CD14-positive monocyte (primary cell): ENCODE measurements at regions of chr22 and their contacts with region 1.

Region 1: GRCh38 chr22:31272522-31273446 is 19.5 kb downstream of the PIK3IP1 start:
- DNase-seq: peak; percentile 49 to 74 (median 49)
- H3K4me3 ChIP-seq: no peak overlapping the region
- H3K4me3 Mint-ChIP-seq: no peak overlapping the region
- H3K27ac ChIP-seq: peak overlapping the region in 1 of 2 donors; percentile 36
- H3K27ac Mint-ChIP-seq: peak overlapping the region in 5 of 7 donors; percentile 33 to 70 (median 62)
- H3K4me1 ChIP-seq: peaks cover 5 to 6% of the 10 kb centered on the region in 2 donors
- H3K4me1 Mint-ChIP-seq: peaks cover 7% of the 10 kb centered on the region
- H3K27me3 ChIP-seq: no peaks in the 10 kb centered on the region
- H3K27me3 Mint-ChIP-seq: peaks cover 0 to 2% (median 2%) of the 10 kb centered on the region in 3 donors
- CTCF ChIP-seq: peak; percentile 79

Region 2: GRCh38 chr22:30763815-30764686 is 508.7 kb before region 1 on chr22:
- intact Hi-C with region 1: loop called in 1 of 2 experiments (anchors 10 kb)
- DNase-seq: peak; percentile 5 to 27 (median 10)
- H3K4me3 ChIP-seq: no peak overlapping the region
- H3K4me3 Mint-ChIP-seq: no peak overlapping the region
- H3K27ac ChIP-seq: no peak overlapping the region
- H3K27ac Mint-ChIP-seq: no peak overlapping the region
- H3K4me1 ChIP-seq: no peaks in the 10 kb centered on the region
- H3K4me1 Mint-ChIP-seq: no peaks in the 10 kb centered on the region
- H3K27me3 ChIP-seq: no peaks in the 10 kb centered on the region
- H3K27me3 Mint-ChIP-seq: peaks cover 0 to 3% (median 2%) of the 10 kb centered on the region in 3 donors
- CTCF ChIP-seq: peak; percentile 76

Region 3: GRCh38 chr22:31080848-31081649 is 191.7 kb before region 1 on chr22 and contains the start of gene SMTN:
- intact Hi-C with region 1: loop called in 1 of 2 experiments (anchors 5 kb)
- DNase-seq: peak; percentile 76 to 86 (median 80)
- H3K4me3 ChIP-seq: peak within 1 kb of the TSS; percentile 56 to 85 (median 75)
- H3K4me3 Mint-ChIP-seq: peak within 1 kb of the TSS; percentile 83 to 94
- H3K27ac ChIP-seq: peak within 1 kb of the TSS in 1 of 2 donors; percentile 64
- H3K27ac Mint-ChIP-seq: peak within 1 kb of the TSS in 6 of 7 donors; percentile 40 to 87 (median 74)
- H3K4me1 ChIP-seq: peaks cover 40 to 53% of the 10 kb centered on the region in 2 donors
- H3K4me1 Mint-ChIP-seq: peaks cover 45% of the 10 kb centered on the region
- H3K27me3 ChIP-seq: no peaks in the 10 kb centered on the region
- H3K27me3 Mint-ChIP-seq: peaks cover 3 to 6% (median 4%) of the 10 kb centered on the region in 3 donors
- CTCF ChIP-seq: no peak
- polyA plus RNA-seq, gene SMTN: 0.87 to 13.3 (median 0.88) TPM

Region 4: GRCh38 chr22:31107178-31107893 is 165.4 kb before region 1 on chr22 and contains the start of gene SELENOM:
- intact Hi-C with region 1: loop called in 1 of 2 experiments (anchors 10 kb)
- DNase-seq: peak; percentile 91 to 94 (median 93)
- H3K4me3 ChIP-seq: peak within 1 kb of the TSS; percentile 14 to 60 (median 37)
- H3K4me3 Mint-ChIP-seq: peak within 1 kb of the TSS; percentile 85 to 93
- H3K27ac ChIP-seq: peak within 1 kb of the TSS in 1 of 2 donors; percentile 9
- H3K27ac Mint-ChIP-seq: peak within 1 kb of the TSS; percentile 70 to 88 (median 81)
- H3K4me1 ChIP-seq: peaks cover 12 to 14% of the 10 kb centered on the region in 2 donors
- H3K4me1 Mint-ChIP-seq: peaks cover 11% of the 10 kb centered on the region
- H3K27me3 ChIP-seq: peaks cover 0 to 2% of the 10 kb centered on the region in 2 donors
- H3K27me3 Mint-ChIP-seq: peaks cover 3 to 20% (median 18%) of the 10 kb centered on the region in 3 donors
- CTCF ChIP-seq: peak; percentile 80
- polyA plus RNA-seq, gene SELENOM: 3.2 to 7.6 (median 3.4) TPM

Region 5: DNA sequence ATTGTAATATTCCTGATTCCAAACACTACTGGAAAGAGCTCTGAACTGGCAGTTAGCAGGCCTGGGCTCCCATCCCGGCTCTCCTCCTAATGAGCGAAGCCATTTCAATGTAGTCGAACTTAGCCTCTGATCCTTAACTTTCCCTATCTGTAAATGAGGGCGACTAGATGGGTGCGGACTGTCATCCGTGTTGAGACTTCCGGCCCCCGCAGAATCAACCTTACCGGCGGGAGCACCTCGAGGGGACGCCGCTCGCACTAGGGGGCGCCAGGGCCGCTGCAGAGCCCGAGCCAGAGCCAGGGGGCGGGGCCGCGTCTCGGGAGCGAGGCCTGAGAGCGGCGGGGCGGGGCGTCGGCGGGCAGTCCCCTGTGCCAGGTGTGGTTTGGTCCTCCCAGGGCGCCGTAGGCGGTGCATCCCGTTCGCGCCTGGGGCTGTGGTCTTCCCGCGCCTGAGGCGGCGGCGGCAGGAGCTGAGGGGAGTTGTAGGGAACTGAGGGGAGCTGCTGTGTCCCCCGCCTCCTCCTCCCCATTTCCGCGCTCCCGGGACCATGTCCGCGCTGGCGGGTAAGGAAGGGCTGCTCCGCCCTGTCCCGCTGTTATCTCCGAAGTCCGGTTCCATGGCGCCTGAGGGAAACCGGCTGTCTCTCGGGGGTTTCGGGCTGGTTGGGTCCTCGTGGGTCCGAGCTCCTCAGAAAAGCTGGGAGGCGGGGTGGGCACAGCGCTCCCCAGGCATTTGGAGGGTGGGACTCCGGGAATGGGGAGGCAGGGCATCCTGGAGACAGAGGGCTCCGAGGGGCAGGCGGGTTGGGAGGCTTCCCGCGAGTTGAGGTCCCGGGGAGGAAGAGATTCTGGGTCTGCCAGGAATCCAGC is 60.7 kb before region 1 on chr22 and contains the start of gene LIMK2:
- intact Hi-C with region 1: loop called in 1 of 2 experiments (anchors 5 kb)
- DNase-seq: peak; percentile 80 to 89 (median 88)
- H3K4me3 ChIP-seq: peak within 1 kb of the TSS; percentile 71 to 97 (median 94)
- H3K4me3 Mint-ChIP-seq: peak within 1 kb of the TSS; percentile 91 to 93
- H3K27ac ChIP-seq: peak within 1 kb of the TSS; percentile 76 to 92
- H3K27ac Mint-ChIP-seq: peak within 1 kb of the TSS; percentile 86 to 97 (median 93)
- H3K4me1 ChIP-seq: peaks cover 61 to 69% of the 10 kb centered on the region in 2 donors
- H3K4me1 Mint-ChIP-seq: peaks cover 62% of the 10 kb centered on the region
- H3K27me3 ChIP-seq: no peaks in the 10 kb centered on the region
- H3K27me3 Mint-ChIP-seq: peaks cover 0 to 6% (median 0%) of the 10 kb centered on the region in 3 donors
- CTCF ChIP-seq: peak; percentile 84
- polyA plus RNA-seq, gene LIMK2: 5.5 to 14.2 (median 10.1) TPM

Region 6: GRCh38 chr22:31378123-31378522 is 105.3 kb after region 1 on chr22:
- intact Hi-C with region 1: no loop called
- DNase-seq: no peak
- H3K4me3 ChIP-seq: no peak overlapping the region
- H3K4me3 Mint-ChIP-seq: no peak overlapping the region
- H3K27ac ChIP-seq: no peak overlapping the region
- H3K27ac Mint-ChIP-seq: peak overlapping the region in 1 of 7 donors; percentile 10
- H3K4me1 ChIP-seq: no peaks in the 10 kb centered on the region
- H3K4me1 Mint-ChIP-seq: peaks cover 8% of the 10 kb centered on the region
- H3K27me3 ChIP-seq: no peaks in the 10 kb centered on the region
- H3K27me3 Mint-ChIP-seq: peaks cover 0 to 5% (median 3%) of the 10 kb centered on the region in 3 donors
- CTCF ChIP-seq: no peak